ENCODE measurements at regions of chr16 and their contacts with region 1.

Region 1: DNA sequence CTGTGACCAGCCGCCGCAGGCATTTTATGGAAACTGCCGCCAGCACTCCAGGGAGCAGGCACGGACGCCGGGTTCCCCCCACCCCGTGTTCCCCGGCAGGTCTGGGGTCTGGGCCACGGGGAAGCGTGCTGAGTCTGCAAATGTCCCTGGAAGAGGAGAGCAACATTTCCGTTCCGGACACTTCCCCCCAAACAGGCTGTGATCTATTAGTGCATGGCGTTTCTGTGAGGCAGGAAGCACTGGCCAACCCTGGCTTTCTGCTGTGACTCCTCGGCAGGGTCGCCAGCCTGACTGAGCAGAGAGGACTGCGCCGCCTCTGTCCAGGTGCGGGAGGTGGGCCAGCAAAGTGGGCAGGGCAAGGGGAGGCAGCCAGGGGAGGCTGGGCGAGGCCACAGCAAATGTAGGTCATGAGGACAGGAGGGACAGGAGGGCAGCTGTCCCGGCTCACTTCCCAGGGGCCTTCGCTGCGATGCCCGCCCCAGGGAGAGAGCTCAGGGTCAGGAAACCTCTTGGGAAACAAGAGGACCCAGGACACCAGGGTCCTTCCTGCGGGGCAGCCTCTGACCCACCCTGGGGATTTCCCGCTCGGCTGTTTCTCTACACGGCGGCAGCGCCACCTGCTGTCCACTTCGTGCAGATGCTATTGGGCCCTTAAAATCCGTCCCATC is 9.5 kb downstream of the FOXF1 start:
- DNase-seq: no peak
- H3K4me3 ChIP-seq: peak overlapping the region; percentile 37
- CTCF ChIP-seq: peak; percentile 86

Region 2: DNA sequence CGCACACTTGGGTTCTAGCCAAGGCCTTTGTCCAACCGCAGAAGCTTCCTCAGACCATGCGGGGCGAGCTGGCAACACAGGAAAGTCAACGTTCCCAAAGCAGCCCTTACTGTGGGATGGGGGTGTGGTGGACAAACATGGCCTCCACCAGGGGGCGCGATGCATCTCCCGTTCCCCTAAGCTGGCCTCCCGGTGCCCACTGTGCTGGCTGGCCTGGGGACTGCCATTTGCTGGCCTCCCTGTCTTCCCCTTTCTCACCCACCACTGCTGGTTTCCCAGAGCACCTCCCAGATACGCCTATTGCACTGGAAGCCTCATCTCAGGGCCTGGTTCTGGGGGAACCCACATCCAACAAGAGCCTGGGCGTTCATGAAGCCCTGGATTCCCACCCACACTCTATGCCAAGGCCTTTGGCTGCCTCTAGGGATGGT is 475.5 kb before region 1 on chr16:
- CTCF ChIA-PET with region 1: interaction called, 93 read pairs
- POLR2A ChIA-PET with region 1: no interaction called
- DNase-seq: no peak
- H3K4me3 ChIP-seq: no peak overlapping the region
- CTCF ChIP-seq: peak; percentile 78

Region 3: GRCh38 chr16:86199871-86200695 is 319.7 kb before region 1 on chr16:
- CTCF ChIA-PET with region 1: interaction called, 25 read pairs
- POLR2A ChIA-PET with region 1: no interaction called
- DNase-seq: no peak
- H3K4me3 ChIP-seq: no peak overlapping the region
- CTCF ChIP-seq: no peak

Region 4: DNA sequence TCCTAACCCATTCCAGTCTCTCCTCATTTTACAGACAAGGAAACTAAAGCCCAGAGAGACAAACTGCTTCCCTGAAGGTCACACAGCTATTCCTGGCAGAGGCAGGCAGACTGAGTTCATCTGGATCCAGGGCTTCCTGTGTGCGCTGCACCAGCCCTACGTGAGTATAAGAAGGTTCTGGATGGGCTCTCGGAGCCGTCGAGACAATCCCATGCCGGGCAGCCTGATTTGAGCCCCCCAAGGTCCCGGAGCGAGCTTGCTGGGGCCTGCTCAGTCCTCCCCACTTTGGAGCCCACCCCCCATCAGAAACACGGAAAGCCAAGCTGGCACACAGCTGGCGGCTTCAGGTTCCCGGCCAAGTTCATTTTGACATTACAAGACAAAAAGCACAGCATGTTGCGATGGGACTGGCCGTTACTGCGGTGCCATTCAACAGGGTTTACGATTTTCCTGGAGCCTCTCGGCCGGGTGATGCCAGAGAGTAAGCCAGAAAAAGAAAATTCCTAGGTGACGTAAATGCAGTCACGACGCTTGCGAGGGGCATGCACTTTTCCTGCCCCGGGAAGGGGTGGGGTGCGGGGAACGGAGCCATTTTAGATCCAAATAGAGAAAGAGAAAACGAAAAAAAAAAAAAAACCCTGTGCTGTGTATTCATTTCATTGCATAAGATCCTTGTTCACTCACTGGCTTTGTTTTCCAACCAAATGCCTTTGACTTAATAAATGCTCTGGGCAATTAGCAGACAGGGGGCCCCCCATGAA is 176.6 kb before region 1 on chr16:
- CTCF ChIA-PET with region 1: interaction called, 126 read pairs
- POLR2A ChIA-PET with region 1: no interaction called
- DNase-seq: no peak
- H3K4me3 ChIP-seq: peak overlapping the region; percentile 6
- CTCF ChIP-seq: no peak

Region 5: DNA sequence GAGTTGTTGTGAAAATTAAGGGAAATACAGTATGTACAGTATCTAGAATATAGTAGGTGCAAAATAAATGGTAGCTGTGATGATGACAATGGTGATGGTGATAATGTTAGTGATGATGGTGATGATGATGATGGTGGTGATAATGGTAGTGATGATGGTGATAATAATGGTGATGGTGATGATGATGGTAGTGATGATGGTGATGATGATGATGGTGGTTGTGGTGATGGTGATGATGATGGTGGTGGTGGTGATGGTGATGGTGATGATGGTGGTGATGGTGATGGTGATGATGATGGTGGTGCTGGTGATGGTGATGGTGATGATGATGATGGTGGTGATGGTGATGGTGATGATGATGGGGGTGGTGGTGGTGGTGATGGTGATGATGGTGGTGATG is 100.8 kb before region 1 on chr16:
- CTCF ChIA-PET with region 1: no interaction called
- POLR2A ChIA-PET with region 1: no interaction called
- DNase-seq: no peak
- H3K4me3 ChIP-seq: no peak overlapping the region
- CTCF ChIP-seq: no peak

Region 6: DNA sequence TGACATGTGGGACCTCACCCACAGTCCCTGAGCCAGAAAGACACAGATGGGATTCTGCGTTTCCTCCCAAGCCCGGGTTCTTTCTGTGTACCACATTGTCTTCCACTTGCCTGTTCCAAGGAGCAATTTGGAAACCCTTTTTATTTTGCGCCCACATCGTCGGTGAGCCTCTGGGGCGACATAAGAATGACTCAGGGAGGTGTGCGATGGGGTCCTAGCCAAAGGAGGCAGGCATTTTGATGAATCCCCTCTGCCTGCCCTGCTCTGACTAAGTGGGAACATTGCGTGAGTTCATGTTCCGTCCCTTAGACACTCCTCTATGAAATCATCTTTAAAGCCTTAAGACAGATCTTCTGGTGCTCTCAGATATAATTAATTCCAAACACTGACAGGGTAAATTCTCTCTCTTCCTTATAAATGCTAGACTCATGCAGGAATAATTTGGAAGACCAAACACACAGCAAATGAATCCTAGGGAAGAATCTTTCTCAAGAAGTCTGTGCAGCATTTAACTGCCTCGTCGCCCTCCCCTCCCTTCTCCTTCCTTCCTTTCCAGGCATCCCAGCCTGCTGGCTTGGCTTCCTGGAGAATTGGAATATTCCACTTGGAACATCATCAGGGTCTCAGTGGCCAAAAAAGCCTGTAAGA is 62.2 kb before region 1 on chr16:
- CTCF ChIA-PET with region 1: interaction called, 15 read pairs
- POLR2A ChIA-PET with region 1: no interaction called
- DNase-seq: peak; percentile 82
- H3K4me3 ChIP-seq: peak overlapping the region; percentile 3; the same call in 1 of the 2 replicates
- CTCF ChIP-seq: no peak

Region 7: GRCh38 chr16:86531191-86531545 is 11.4 kb after region 1 on chr16:
- CTCF ChIA-PET with region 1: interaction called, 54 read pairs
- POLR2A ChIA-PET with region 1: no interaction called
- DNase-seq: no peak
- H3K4me3 ChIP-seq: no peak overlapping the region
- CTCF ChIP-seq: no peak

Region 8: GRCh38 chr16:86609115-86609514 is 89.3 kb after region 1 on chr16:
- CTCF ChIA-PET with region 1: no interaction called
- POLR2A ChIA-PET with region 1: no interaction called
- DNase-seq: peak; percentile 94
- H3K4me3 ChIP-seq: no peak overlapping the region
- CTCF ChIP-seq: no peak

Region 9: DNA sequence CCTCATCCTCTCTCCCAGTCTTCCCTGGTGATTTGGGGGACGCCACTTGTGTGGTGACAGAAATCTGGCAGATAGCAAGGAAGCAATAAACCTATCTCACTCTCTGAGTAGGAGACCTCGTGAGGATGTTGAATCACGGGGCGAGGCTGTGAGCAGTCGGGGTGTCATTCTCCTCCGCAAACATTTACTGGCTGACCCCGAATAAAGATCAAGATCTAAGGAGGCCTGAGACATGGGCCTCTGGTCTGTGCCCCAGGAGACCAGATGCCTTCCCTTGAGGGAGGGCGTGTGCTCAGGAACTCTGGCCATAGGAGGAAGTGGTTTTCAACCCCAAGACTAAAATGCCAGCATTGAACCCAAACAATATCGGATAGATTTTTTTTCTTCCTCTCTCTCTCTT is 111.7 kb after region 1 on chr16:
- CTCF ChIA-PET with region 1: no interaction called
- POLR2A ChIA-PET with region 1: no interaction called
- DNase-seq: no peak
- H3K4me3 ChIP-seq: no peak overlapping the region
- CTCF ChIP-seq: no peak

Measured in AG04449 (cell line).